ENCODE measurements at regions of chr12 and their contacts with region 1.

Region 1: GRCh38 chr12:119179326-119180021 is 743 bp downstream of the HSPB8 start:
- DNase-seq: no peak

Region 2: DNA sequence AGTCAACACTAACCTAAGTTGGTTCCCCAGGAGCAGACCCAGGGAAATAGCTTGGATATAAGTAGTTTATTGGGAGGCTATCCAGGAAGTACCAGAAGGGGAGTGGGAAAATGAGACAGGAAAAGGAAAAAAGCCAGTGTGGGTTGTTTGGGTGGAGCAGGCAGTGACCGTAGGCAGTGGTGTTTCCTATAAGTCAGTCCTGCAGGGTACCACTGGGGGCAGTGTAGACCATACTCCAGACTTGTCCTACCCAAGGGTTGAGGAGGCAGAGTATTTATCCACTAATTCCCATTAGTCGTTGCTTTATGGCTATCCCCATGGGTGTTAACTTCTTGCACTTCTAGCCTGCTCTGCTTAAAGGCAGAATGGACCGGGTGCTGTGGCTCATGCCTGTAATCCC is 148.6 kb after region 1 on chr12:
- intact Hi-C with region 1: loop called in 1 of 2 experiments (anchors 10 kb)
- DNase-seq: no peak

Measured in posterior vena cava (tissue), 2 donors.